B cell (primary cell): ENCODE measurements at regions of chr3 and their contacts with region 1.

Region 1: DNA sequence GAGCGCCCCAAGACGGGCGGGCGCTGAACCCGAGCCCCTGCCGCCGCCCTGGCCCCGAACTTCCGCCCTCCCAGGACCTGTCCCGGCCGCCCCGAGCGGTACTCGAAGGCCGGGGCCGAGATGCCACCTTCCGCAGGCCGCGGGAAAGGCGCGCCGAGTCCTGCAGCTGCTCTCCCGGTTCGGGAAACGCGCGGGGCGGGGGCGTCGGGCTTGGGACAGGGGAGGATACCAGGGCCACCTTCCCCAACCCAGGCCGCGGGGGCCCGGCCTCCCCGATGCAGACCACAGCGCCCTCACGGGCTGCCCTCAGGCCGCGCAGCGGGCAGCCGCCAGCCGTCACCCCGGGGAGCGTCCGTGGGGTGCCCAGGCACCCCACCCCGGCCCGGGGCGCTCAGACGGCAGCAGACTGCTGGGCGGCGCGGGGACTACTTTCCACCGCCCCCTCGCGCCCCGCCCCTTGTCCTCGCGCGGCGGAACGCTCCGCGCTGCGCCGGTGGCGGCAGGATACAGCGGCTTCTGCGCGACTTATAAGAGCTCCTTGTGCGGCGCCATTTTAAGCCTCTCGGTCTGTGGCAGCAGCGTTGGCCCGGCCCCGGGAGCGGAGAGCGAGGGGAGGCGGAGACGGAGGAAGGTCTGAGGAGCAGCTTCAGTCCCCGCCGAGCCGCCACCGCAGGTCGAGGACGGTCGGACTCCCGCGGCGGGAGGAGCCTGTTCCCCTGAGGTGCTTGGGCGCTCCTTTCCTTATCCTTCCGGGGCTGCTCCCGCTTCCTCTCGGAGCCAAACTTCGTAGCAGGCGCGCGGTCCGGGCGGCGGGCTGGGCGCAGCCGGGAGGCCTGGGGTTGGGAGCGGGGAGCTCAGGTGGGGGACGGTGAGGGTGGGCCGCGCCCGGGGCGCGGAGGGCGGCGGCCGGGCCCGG is at the start of gene CTNNB1:
- DNase-seq: peak; percentile 97
- ATAC-seq: peak; percentile 82
- H3K4me3 ChIP-seq: peak within 1 kb of the TSS; percentile 91 to 98 (median 96)
- H3K4me3 Mint-ChIP-seq: peak within 1 kb of the TSS; percentile 96
- H3K27ac ChIP-seq: peak within 1 kb of the TSS; percentile 94 to 97
- H3K27ac Mint-ChIP-seq: peak within 1 kb of the TSS; percentile 95
- H3K4me1 ChIP-seq: peaks cover 38 to 43% of the 10 kb centered on the region in 2 donors
- H3K4me1 Mint-ChIP-seq: peaks cover 45% of the 10 kb centered on the region
- H3K27me3 ChIP-seq: peaks cover 0 to 4% (median 0%) of the 10 kb centered on the region in 4 experiments
- H3K27me3 Mint-ChIP-seq: peaks cover 8% of the 10 kb centered on the region
- CTCF ChIP-seq: no peak
- total RNA-seq, gene CTNNB1: 178 and 202 TPM in 2 replicates

Region 2: GRCh38 chr3:40329071-40329470 is 870.1 kb before region 1 on chr3:
- CTCF ChIA-PET with region 1: no interaction called
- POLR2A ChIA-PET with region 1: no interaction called
- intact Hi-C with region 1: loop called (anchors 5 kb)
- DNase-seq: no peak
- ATAC-seq: no peak
- H3K4me3 ChIP-seq: no peak overlapping the region
- H3K4me3 Mint-ChIP-seq: no peak overlapping the region
- H3K27ac ChIP-seq: no peak overlapping the region
- H3K27ac Mint-ChIP-seq: no peak overlapping the region
- H3K4me1 ChIP-seq: peaks cover 0 to 5% of the 10 kb centered on the region in 2 donors
- H3K4me1 Mint-ChIP-seq: peaks cover 3% of the 10 kb centered on the region
- H3K27me3 ChIP-seq: no peaks in the 10 kb centered on the region
- H3K27me3 Mint-ChIP-seq: peaks cover 7% of the 10 kb centered on the region
- CTCF ChIP-seq: no peak

Region 3: DNA sequence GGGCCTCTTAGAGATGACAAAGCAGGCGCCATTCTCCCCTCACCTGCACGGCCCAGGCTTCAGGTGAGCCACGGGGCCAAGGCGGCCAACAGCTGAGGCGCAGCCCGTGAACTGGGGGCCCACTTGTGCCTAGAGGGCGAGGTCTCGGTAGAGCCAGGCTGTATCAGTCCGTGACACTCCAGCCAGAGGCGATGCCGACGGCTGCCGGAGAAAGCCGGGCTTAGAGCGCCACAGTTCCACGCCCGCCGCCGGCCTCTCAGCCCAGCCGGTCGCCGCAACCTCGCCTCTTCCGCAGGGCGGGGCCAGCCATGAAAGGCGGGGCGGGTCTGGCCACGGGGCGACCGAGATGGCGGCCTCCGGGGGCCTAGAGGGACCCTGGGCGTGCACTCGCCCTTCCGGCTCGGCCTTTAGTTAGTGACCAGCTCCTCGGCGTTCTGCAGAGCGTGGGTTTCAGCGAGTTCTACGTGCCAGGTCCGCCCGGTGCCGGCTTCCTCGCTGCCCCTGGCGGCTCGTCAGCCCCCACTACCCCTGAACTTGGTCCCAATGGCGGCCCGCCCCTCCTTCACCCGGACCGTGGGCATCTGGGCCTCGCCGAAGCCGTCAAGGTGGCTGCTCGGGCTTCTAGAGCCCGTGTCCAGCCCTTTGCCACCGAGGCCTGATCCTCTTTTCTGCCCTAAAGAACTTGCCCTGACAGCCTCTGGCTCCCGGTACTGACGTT is 674.5 kb before region 1 on chr3 and contains the start of gene ZNF621:
- CTCF ChIA-PET with region 1: no interaction called
- POLR2A ChIA-PET with region 1: interaction called, 5 read pairs
- intact Hi-C with region 1: loop called (anchors 2 kb)
- DNase-seq: peak; percentile 89
- ATAC-seq: peak; percentile 99
- H3K4me3 ChIP-seq: peak within 1 kb of the TSS; percentile 27 to 94 (median 87)
- H3K4me3 Mint-ChIP-seq: peak within 1 kb of the TSS; percentile 96
- H3K27ac ChIP-seq: peak within 1 kb of the TSS; percentile 86 to 91
- H3K27ac Mint-ChIP-seq: peak within 1 kb of the TSS; percentile 94
- H3K4me1 ChIP-seq: peaks cover 16% of the 10 kb centered on the region in 2 donors
- H3K4me1 Mint-ChIP-seq: peaks cover 24% of the 10 kb centered on the region
- H3K27me3 ChIP-seq: no peaks in the 10 kb centered on the region
- H3K27me3 Mint-ChIP-seq: no peaks in the 10 kb centered on the region
- CTCF ChIP-seq: no peak
- total RNA-seq, gene ZNF621: 34.6 and 35.2 TPM in 2 replicates

Region 4: GRCh38 chr3:40713795-40714194 is 485.4 kb before region 1 on chr3:
- CTCF ChIA-PET with region 1: no interaction called
- POLR2A ChIA-PET with region 1: no interaction called
- intact Hi-C with region 1: loop called (anchors 2 kb)
- DNase-seq: peak; percentile 68
- ATAC-seq: peak; percentile 70
- H3K4me3 ChIP-seq: peak overlapping the region in 1 of 5 experiments; percentile 8
- H3K4me3 Mint-ChIP-seq: peak overlapping the region; percentile 55
- H3K27ac ChIP-seq: peak overlapping the region; percentile 28 to 42
- H3K27ac Mint-ChIP-seq: peak overlapping the region; percentile 66
- H3K4me1 ChIP-seq: peaks cover 44 to 49% of the 10 kb centered on the region in 2 donors
- H3K4me1 Mint-ChIP-seq: peaks cover 53% of the 10 kb centered on the region
- H3K27me3 ChIP-seq: no peaks in the 10 kb centered on the region
- H3K27me3 Mint-ChIP-seq: no peaks in the 10 kb centered on the region
- CTCF ChIP-seq: no peak

Region 5: DNA sequence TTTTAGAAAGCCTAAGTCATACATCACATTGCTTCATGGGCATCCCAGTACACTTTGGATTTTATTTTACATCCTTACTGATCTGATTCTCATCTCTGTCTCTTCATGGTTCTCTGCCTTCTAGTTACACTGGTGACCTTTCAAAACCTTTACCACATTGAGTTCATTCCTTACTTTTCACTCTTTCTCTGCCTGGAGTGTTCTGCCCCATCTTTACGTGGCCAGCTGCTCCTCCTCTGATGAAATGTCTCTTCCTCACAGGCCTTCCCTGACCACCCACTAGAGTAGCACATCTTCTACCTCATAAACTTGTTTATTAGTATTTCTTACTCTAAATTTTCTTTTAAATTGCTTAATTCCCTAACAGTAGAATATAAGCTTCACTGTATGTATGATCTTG is 17.8 kb after region 1 on chr3:
- CTCF ChIA-PET with region 1: interaction called, 7 read pairs
- POLR2A ChIA-PET with region 1: interaction called, 3 read pairs
- intact Hi-C with region 1: loop called (anchors 2 kb)
- DNase-seq: no peak
- ATAC-seq: no peak
- H3K4me3 ChIP-seq: no peak overlapping the region
- H3K4me3 Mint-ChIP-seq: peak overlapping the region; percentile 5
- H3K27ac ChIP-seq: peak overlapping the region in 1 of 2 donors; percentile 18
- H3K27ac Mint-ChIP-seq: peak overlapping the region; percentile 16
- H3K4me1 ChIP-seq: peaks cover 32 to 61% of the 10 kb centered on the region in 2 donors
- H3K4me1 Mint-ChIP-seq: peaks cover 81% of the 10 kb centered on the region
- H3K27me3 ChIP-seq: no peaks in the 10 kb centered on the region
- H3K27me3 Mint-ChIP-seq: no peaks in the 10 kb centered on the region
- CTCF ChIP-seq: no peak

Region 6: DNA sequence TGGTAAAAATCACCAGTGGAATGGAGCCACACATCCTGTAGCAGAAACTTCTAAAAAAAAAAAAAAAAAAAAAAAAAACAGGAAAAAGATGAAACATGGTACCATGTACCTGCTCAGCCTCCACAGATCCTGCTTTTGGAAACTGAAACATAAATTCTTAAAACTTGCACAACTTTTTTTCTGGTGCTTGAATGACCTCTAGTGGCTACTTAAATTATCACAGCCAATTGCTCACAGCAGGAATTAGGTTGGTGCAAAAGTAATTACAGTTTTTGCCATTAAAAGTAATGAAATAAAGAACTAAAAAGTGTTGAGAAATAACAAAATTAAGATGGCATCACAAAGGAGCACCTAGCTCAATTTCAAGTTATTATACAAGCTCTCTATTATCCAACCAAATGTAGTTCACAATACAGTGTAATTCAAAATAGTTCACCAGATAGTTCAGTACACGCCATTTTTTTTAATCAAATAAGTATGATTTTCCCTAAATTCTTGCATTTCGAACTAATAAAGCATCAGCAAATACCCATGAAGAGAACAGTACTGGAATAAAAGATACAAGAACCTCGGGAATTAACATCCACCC is 682.1 kb after region 1 on chr3:
- CTCF ChIA-PET with region 1: no interaction called
- POLR2A ChIA-PET with region 1: no interaction called
- intact Hi-C with region 1: loop called (anchors 10 kb)
- DNase-seq: peak; percentile 67
- ATAC-seq: no peak
- H3K4me3 ChIP-seq: no peak overlapping the region
- H3K4me3 Mint-ChIP-seq: no peak overlapping the region
- H3K27ac ChIP-seq: no peak overlapping the region
- H3K27ac Mint-ChIP-seq: no peak overlapping the region
- H3K4me1 ChIP-seq: no peaks in the 10 kb centered on the region
- H3K4me1 Mint-ChIP-seq: no peaks in the 10 kb centered on the region
- H3K27me3 ChIP-seq: no peaks in the 10 kb centered on the region
- H3K27me3 Mint-ChIP-seq: no peaks in the 10 kb centered on the region
- CTCF ChIP-seq: peak; percentile 82